ENCODE measurements at regions of chr9 and their contacts with region 1.

Region 1: GRCh38 chr9:97598461-97599288 is 34.5 kb downstream of the TSTD2 start:
- DNase-seq: peak; percentile 77
- H3K4me3 Mint-ChIP-seq: no peak overlapping the region
- H3K27ac Mint-ChIP-seq: no peak overlapping the region
- H3K4me1 Mint-ChIP-seq: peaks cover 6% of the 10 kb centered on the region
- H3K27me3 Mint-ChIP-seq: no peaks in the 10 kb centered on the region

Region 2: DNA sequence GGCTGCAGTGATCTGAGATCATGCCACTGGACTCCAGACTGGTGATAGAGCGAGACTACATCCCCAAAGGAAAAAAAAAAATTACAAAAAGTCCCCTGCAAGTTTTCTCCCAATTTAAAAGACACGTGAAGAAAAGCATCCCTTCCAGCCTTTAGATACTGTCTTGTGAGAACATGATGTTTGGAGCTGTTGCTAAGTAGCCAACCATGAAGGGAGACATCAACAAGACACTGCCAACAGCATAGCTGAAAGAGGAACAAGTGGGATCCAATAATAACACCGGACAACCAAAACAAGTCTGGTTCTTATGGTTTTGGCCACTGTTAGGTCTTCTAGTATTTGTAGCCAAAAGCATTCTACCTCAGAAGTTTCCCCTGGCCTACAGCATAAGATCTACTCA is 410.1 kb before region 1 on chr9:
- CTCF ChIA-PET with region 1: no interaction called
- POLR2A ChIA-PET with region 1: no interaction called
- intact Hi-C with region 1: no loop called
- DNase-seq: no peak
- H3K4me3 Mint-ChIP-seq: no peak overlapping the region
- H3K27ac Mint-ChIP-seq: no peak overlapping the region
- H3K4me1 Mint-ChIP-seq: no peaks in the 10 kb centered on the region
- H3K27me3 Mint-ChIP-seq: no peaks in the 10 kb centered on the region

Region 3: GRCh38 chr9:97411789-97412625 is 186.7 kb before region 1 on chr9 and contains the start of gene TDRD7:
- CTCF ChIA-PET with region 1: interaction called, 73 read pairs
- POLR2A ChIA-PET with region 1: no interaction called
- intact Hi-C with region 1: loop called (anchors 1 kb)
- DNase-seq: peak; percentile 92
- H3K4me3 Mint-ChIP-seq: peak within 1 kb of the TSS; percentile 82
- H3K27ac Mint-ChIP-seq: peak within 1 kb of the TSS; percentile 61
- H3K4me1 Mint-ChIP-seq: peaks cover 23% of the 10 kb centered on the region
- H3K27me3 Mint-ChIP-seq: peaks cover 11% of the 10 kb centered on the region
- total RNA-seq, gene TDRD7: 12.3 to 12.5 TPM

Region 4: GRCh38 chr9:97475059-97475458 is 123.6 kb before region 1 on chr9:
- CTCF ChIA-PET with region 1: interaction called, 225 read pairs
- POLR2A ChIA-PET with region 1: no interaction called
- intact Hi-C with region 1: no loop called
- DNase-seq: no peak
- H3K4me3 Mint-ChIP-seq: no peak overlapping the region
- H3K27ac Mint-ChIP-seq: no peak overlapping the region
- H3K4me1 Mint-ChIP-seq: no peaks in the 10 kb centered on the region
- H3K27me3 Mint-ChIP-seq: no peaks in the 10 kb centered on the region

Region 5: GRCh38 chr9:97559111-97559514 is 39.6 kb before region 1 on chr9:
- CTCF ChIA-PET with region 1: interaction called, 10 read pairs
- POLR2A ChIA-PET with region 1: no interaction called
- intact Hi-C with region 1: no loop called
- DNase-seq: peak; percentile 48
- H3K4me3 Mint-ChIP-seq: peak overlapping the region; percentile 38
- H3K27ac Mint-ChIP-seq: peak overlapping the region; percentile 82
- H3K4me1 Mint-ChIP-seq: peaks cover 12% of the 10 kb centered on the region
- H3K27me3 Mint-ChIP-seq: peaks cover 10% of the 10 kb centered on the region

Region 6: DNA sequence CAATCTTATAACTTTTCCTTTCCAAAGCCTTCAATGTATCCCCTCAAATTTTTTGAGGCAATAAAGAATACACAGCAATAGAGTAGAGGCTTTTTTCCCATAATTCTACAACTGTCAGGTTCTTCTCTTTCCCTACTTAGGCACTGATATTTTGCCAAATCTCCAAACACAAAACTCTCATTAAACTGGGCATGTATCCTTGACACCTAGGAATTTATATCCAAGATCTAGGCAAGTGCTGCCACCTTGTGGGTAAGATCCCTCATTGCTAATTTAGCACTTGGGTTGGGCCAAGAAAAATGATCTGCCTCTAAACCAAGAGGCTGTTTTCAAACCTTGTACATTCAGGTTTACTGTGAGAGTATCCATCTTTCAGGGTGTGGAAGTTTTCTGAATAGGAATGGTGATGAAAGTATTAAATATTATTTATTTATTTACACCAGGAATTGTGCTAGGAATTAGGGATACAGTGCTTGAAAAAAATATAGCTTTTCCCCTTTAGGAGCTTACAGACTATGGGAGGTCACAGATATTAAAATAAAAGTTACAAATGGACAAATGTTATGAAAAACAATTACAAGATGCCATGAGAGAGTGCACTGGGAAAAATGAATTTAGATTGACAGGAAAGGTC is 16.9 kb after region 1 on chr9:
- CTCF ChIA-PET with region 1: interaction called, 64 read pairs
- POLR2A ChIA-PET with region 1: no interaction called
- intact Hi-C with region 1: no loop called
- DNase-seq: peak; percentile 64
- H3K4me3 Mint-ChIP-seq: no peak overlapping the region
- H3K27ac Mint-ChIP-seq: no peak overlapping the region
- H3K4me1 Mint-ChIP-seq: peaks cover 12% of the 10 kb centered on the region
- H3K27me3 Mint-ChIP-seq: no peaks in the 10 kb centered on the region

Measured in activated CD4-positive, alpha-beta memory T cell treated with anti-CD3 and anti-CD28 coated beads for 36 hours (primary cell).